Naive thymus-derived CD4-positive, alpha-beta T cell (primary cell): ENCODE measurements at regions of chr2 and their contacts with region 1.

Region 1: DNA sequence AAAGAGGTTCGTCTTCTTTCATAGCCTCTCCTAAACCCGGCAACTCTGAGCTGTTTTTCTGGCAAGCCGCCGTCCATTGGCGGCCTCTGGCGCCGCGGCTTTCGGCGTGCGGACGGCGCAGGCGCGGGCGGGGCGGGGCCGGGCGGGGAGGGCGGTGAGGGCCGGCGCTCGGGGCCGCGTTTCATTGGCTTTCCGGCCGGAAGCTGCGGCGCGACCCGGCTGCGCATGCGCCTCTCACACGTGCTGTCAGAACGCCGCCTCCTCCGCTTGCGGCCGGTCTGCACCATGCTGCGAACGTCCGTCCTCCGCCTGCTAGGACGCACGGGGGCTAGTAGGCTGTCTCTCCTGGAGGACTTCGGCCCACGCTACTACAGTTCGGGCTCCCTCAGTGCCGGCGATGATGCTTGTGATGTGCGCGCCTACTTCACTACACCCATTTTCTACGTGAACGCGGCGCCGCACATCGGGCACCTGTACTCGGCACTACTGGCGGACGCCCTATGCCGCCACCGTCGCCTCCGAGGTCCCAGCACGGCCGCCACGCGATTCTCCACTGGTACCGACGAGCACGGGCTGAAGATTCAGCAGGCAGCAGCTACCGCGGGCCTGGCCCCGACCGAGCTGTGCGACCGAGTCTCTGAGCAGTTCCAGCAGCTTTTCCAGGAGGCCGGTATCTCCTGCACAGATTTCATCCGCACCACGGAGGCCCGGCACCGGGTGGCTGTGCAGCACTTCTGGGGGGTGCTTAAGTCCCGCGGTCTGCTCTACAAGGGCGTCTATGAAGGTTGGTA is at the start of gene MARS2:
- DNase-seq: peak; percentile 89 to 95 (median 93)
- ATAC-seq: peak; percentile 92
- H3K4me3 ChIP-seq: peak within 1 kb of the TSS; percentile 93
- H3K4me3 Mint-ChIP-seq: peak within 1 kb of the TSS; percentile 78 to 96 (median 94)
- H3K27ac ChIP-seq: peak within 1 kb of the TSS; percentile 87
- H3K27ac Mint-ChIP-seq: peak within 1 kb of the TSS; percentile 88 to 99 (median 97)
- H3K4me1 ChIP-seq: peaks cover 29 to 32% of the 10 kb centered on the region in 2 donors
- H3K4me1 Mint-ChIP-seq: peaks cover 33 to 56% (median 48%) of the 10 kb centered on the region in 7 donors
- H3K27me3 ChIP-seq: no peaks in the 10 kb centered on the region
- H3K27me3 Mint-ChIP-seq: peaks cover 0 to 13% (median 7%) of the 10 kb centered on the region in 5 donors
- total RNA-seq, gene MARS2: 8.8 to 15.4 (median 13.6) TPM

Region 2: GRCh38 chr2:196068271-196069209 is 1636.8 kb before region 1 on chr2 and contains the start of gene DNAH7:
- CTCF ChIA-PET with region 1: no interaction called
- POLR2A ChIA-PET with region 1: no interaction called
- intact Hi-C with region 1: loop called in 1 of 2 experiments (anchors 5 kb)
- DNase-seq: peak; percentile 84 to 94 (median 92)
- ATAC-seq: peak; percentile 96
- H3K4me3 ChIP-seq: peak within 1 kb of the TSS; percentile 69
- H3K4me3 Mint-ChIP-seq: peak within 1 kb of the TSS; percentile 77 to 92 (median 88)
- H3K27ac ChIP-seq: peak within 1 kb of the TSS; percentile 45
- H3K27ac Mint-ChIP-seq: peak within 1 kb of the TSS; percentile 75 to 94 (median 86)
- H3K4me1 ChIP-seq: peaks cover 6% of the 10 kb centered on the region in 2 donors
- H3K4me1 Mint-ChIP-seq: peaks cover 6 to 16% (median 12%) of the 10 kb centered on the region in 7 donors
- H3K27me3 ChIP-seq: peaks cover 0 to 3% of the 10 kb centered on the region in 2 donors
- H3K27me3 Mint-ChIP-seq: peaks cover 0 to 33% (median 3%) of the 10 kb centered on the region in 5 donors
- total RNA-seq, gene DNAH7: not detected

Region 3: GRCh38 chr2:196798980-196799379 is 906.3 kb before region 1 on chr2:
- CTCF ChIA-PET with region 1: no interaction called
- POLR2A ChIA-PET with region 1: interaction called, 5 read pairs
- intact Hi-C with region 1: loop called in 1 of 2 experiments (anchors 2 kb)
- DNase-seq: peak in 1 of 9 donors; percentile 1
- ATAC-seq: peak; percentile 1
- H3K4me3 ChIP-seq: peak overlapping the region; percentile 98
- H3K4me3 Mint-ChIP-seq: peak overlapping the region; percentile 85 to 99 (median 96)
- H3K27ac ChIP-seq: peak overlapping the region; percentile 73
- H3K27ac Mint-ChIP-seq: peak overlapping the region; percentile 89 to 99 (median 91)
- H3K4me1 ChIP-seq: peaks cover 4 to 6% of the 10 kb centered on the region in 2 donors
- H3K4me1 Mint-ChIP-seq: peaks cover 17 to 52% (median 38%) of the 10 kb centered on the region in 7 donors
- H3K27me3 ChIP-seq: no peaks in the 10 kb centered on the region
- H3K27me3 Mint-ChIP-seq: peaks cover 0 to 4% (median 4%) of the 10 kb centered on the region in 5 donors

Region 4: GRCh38 chr2:197434541-197435513 is 270.5 kb before region 1 on chr2 and contains the start of gene SF3B1:
- CTCF ChIA-PET with region 1: no interaction called
- POLR2A ChIA-PET with region 1: interaction called, 8 read pairs
- intact Hi-C with region 1: loop called (anchors 1 kb)
- DNase-seq: peak; percentile 98 to 99 (median 99)
- ATAC-seq: peak; percentile 99
- H3K4me3 ChIP-seq: peak within 1 kb of the TSS; percentile 98
- H3K4me3 Mint-ChIP-seq: peak within 1 kb of the TSS; percentile 88 to 100 (median 98)
- H3K27ac ChIP-seq: peak within 1 kb of the TSS; percentile 98
- H3K27ac Mint-ChIP-seq: peak within 1 kb of the TSS; percentile 100
- H3K4me1 ChIP-seq: peaks cover 28 to 46% of the 10 kb centered on the region in 2 donors
- H3K4me1 Mint-ChIP-seq: peaks cover 34 to 60% (median 49%) of the 10 kb centered on the region in 7 donors
- H3K27me3 ChIP-seq: no peaks in the 10 kb centered on the region
- H3K27me3 Mint-ChIP-seq: peaks cover 0 to 3% (median 0%) of the 10 kb centered on the region in 5 donors
- total RNA-seq, gene SF3B1: 330 to 737 (median 528) TPM

Region 5: DNA sequence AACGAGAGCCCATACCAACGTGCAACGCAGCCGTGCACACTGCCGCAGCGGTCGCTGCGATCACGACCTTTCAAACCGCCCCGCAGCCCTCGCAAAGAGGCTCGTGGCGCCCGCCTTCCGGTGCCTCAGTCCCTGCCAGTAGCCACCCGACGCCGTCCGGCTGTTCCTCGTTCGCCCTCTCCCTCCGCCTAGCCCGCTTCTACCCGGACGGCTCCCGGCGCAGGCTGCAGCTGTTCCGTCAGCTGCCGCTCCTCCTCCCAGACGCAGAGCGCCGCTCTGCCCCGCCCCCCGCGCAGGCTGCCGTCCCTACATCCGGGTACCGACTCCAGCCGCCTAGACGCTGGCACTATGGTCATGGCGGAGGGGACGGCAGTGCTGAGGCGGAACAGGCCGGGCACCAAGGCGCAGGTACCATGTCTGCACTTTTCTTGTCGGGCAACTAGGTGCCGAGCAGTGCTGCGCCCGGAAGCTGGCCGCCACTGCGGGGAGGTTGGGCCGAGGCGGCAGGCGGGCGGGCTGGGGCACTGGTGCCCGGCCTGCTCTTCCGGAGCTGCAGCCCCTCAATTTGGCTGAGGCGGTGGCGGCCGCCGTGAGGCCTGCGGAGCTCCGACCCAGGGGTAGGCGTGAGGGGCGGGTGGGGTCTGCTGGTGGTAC is 189.4 kb before region 1 on chr2 and contains the start of gene MOB4:
- CTCF ChIA-PET with region 1: no interaction called
- POLR2A ChIA-PET with region 1: interaction called, 12 read pairs
- intact Hi-C with region 1: loop called (anchors 1 to 2 kb)
- DNase-seq: peak; percentile 87 to 98 (median 92)
- ATAC-seq: peak; percentile 97
- H3K4me3 ChIP-seq: peak within 1 kb of the TSS; percentile 75
- H3K4me3 Mint-ChIP-seq: peak within 1 kb of the TSS; percentile 85 to 99 (median 98)
- H3K27ac ChIP-seq: peak within 1 kb of the TSS; percentile 86
- H3K27ac Mint-ChIP-seq: peak within 1 kb of the TSS; percentile 88 to 99 (median 95)
- H3K4me1 ChIP-seq: peaks cover 10 to 12% of the 10 kb centered on the region in 2 donors
- H3K4me1 Mint-ChIP-seq: peaks cover 28 to 49% (median 40%) of the 10 kb centered on the region in 7 donors
- H3K27me3 ChIP-seq: no peaks in the 10 kb centered on the region
- H3K27me3 Mint-ChIP-seq: no peaks in the 10 kb centered on the region
- total RNA-seq, gene MOB4: 16.1 to 22.5 (median 17.9) TPM

Region 6: GRCh38 chr2:197873293-197873701 is 168.0 kb after region 1 on chr2:
- CTCF ChIA-PET with region 1: no interaction called
- POLR2A ChIA-PET with region 1: no interaction called
- intact Hi-C with region 1: loop called (anchors 10 kb)
- DNase-seq: no peak
- ATAC-seq: no peak
- H3K4me3 ChIP-seq: no peak overlapping the region
- H3K4me3 Mint-ChIP-seq: peak overlapping the region in 1 of 10 donors; percentile 33
- H3K27ac ChIP-seq: no peak overlapping the region
- H3K27ac Mint-ChIP-seq: peak overlapping the region in 3 of 9 donors; percentile 28 to 62 (median 47)
- H3K4me1 ChIP-seq: peaks cover 0 to 34% of the 10 kb centered on the region in 2 donors
- H3K4me1 Mint-ChIP-seq: peaks cover 29 to 92% (median 85%) of the 10 kb centered on the region in 7 donors
- H3K27me3 ChIP-seq: no peaks in the 10 kb centered on the region
- H3K27me3 Mint-ChIP-seq: no peaks in the 10 kb centered on the region

Region 7: GRCh38 chr2:198296665-198297308 is 591.5 kb after region 1 on chr2:
- CTCF ChIA-PET with region 1: interaction called, 11 read pairs
- POLR2A ChIA-PET with region 1: no interaction called
- intact Hi-C with region 1: loop called (anchors 1 kb)
- DNase-seq: peak; percentile 11 to 67 (median 54)
- ATAC-seq: peak; percentile 84
- H3K4me3 ChIP-seq: no peak overlapping the region
- H3K4me3 Mint-ChIP-seq: peak overlapping the region in 1 of 10 donors; percentile 8
- H3K27ac ChIP-seq: no peak overlapping the region
- H3K27ac Mint-ChIP-seq: peak overlapping the region in 1 of 9 donors; percentile 41
- H3K4me1 ChIP-seq: no peaks in the 10 kb centered on the region
- H3K4me1 Mint-ChIP-seq: peaks cover 0 to 5% (median 0%) of the 10 kb centered on the region in 7 donors
- H3K27me3 ChIP-seq: no peaks in the 10 kb centered on the region
- H3K27me3 Mint-ChIP-seq: peaks cover 7 to 19% (median 8%) of the 10 kb centered on the region in 5 donors